ENCODE measurements at regions of chr6 and their contacts with region 1.

Region 1: DNA sequence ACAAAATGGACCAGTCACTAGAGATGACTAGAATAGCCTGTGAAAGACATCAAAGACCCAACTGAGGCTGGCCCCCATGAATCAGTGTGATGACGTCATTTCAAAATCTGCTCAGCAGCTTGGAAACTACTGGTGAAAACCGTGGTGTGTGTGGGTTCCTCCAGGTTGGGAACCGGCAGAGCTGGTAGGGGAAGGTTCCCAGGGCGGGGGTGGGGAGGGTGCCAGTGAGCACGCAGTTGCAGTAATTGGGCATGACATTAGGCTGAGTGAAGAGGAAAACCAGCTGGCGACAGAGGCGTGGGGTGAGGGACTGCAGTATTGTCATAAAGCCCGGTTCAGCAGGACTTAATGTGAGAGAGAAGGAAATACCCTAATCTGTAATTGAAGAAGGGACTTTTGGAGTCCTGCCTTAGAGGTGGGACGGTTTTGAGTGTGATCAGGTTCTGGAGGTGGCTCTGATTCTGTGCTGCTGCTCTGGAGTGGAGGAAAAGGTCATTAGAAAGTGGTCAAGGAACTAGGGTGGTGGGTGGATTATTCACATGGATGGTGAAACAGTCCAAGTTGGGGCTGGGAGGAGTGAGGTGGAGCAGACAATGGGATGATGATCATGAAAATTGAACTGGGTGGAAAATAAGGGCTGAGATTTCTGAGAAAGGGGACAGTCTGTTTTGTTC is 52.0 kb upstream of the MTHFD1L start:
- DNase-seq: peak; percentile 22
- ATAC-seq: peak; percentile 79
- H3K4me3 Mint-ChIP-seq: peak overlapping the region; percentile 69
- H3K27ac Mint-ChIP-seq: peak overlapping the region; percentile 99
- H3K4me1 Mint-ChIP-seq: peaks cover 32% of the 10 kb centered on the region
- H3K27me3 Mint-ChIP-seq: no peaks in the 10 kb centered on the region
- CTCF ChIP-seq: no peak

Region 2: DNA sequence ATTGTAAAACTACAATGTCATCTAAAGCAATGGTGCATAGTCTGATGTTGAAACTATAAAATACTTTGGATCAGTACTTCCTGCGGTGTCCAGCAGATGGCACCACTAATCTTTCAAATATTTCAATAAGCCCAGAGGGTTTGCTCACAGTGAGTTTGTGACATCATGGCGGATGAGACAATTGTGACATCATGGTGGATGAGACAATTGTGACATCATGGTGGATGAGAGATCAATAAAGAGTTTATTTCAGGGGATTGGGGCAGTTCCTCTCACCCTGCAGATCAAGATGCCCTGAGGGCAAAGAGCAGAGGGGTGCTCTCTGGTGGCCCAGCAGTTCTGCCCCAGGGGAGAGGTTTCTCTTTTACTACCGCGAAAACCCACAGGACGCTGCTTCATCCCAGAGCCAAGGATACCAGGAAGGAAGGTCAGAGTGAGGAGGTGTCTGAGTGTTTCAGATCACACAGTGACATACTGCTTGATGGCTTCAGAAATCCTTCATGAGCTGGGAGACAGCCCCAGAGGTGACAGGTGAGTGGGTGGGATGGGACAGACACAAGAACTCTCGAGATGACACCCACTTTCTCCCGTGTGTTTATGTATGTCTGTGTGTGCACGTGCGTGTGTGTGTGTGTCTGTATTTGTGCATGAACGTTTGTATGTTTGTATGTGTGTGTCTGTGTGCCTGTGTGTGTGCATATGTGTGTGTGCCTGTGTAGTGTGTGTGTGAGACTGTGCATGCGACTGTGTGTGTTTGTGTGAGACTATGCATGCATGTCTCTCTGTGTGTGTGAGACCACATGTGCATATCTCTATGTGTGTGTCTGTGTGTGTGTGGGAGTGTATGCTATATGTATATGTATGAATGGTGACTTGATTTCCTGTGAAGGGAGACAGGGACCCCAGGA is 879.0 kb before region 1 on chr6:
- CTCF ChIA-PET with region 1: no interaction called
- POLR2A ChIA-PET with region 1: no interaction called
- intact Hi-C with region 1: loop called (anchors 2 kb)
- DNase-seq: no peak
- ATAC-seq: peak; percentile 33
- H3K4me3 Mint-ChIP-seq: no peak overlapping the region
- H3K27ac Mint-ChIP-seq: no peak overlapping the region
- H3K4me1 Mint-ChIP-seq: peaks cover 21% of the 10 kb centered on the region
- H3K27me3 Mint-ChIP-seq: peaks cover 72% of the 10 kb centered on the region
- CTCF ChIP-seq: no peak

Region 3: GRCh38 chr6:150068720-150069648 is 744.5 kb before region 1 on chr6 and contains the start of gene ULBP3:
- CTCF ChIA-PET with region 1: interaction called, 3 read pairs
- POLR2A ChIA-PET with region 1: no interaction called
- intact Hi-C with region 1: loop called (anchors 2 kb)
- DNase-seq: peak; percentile 64
- ATAC-seq: peak; percentile 92
- H3K4me3 Mint-ChIP-seq: peak within 1 kb of the TSS; percentile 84
- H3K27ac Mint-ChIP-seq: peak within 1 kb of the TSS; percentile 7
- H3K4me1 Mint-ChIP-seq: peaks cover 22% of the 10 kb centered on the region
- H3K27me3 Mint-ChIP-seq: peaks cover 18% of the 10 kb centered on the region
- CTCF ChIP-seq: no peak
- total RNA-seq, gene ULBP3: 0.46 and 0.80 TPM in 2 replicates

Region 4: DNA sequence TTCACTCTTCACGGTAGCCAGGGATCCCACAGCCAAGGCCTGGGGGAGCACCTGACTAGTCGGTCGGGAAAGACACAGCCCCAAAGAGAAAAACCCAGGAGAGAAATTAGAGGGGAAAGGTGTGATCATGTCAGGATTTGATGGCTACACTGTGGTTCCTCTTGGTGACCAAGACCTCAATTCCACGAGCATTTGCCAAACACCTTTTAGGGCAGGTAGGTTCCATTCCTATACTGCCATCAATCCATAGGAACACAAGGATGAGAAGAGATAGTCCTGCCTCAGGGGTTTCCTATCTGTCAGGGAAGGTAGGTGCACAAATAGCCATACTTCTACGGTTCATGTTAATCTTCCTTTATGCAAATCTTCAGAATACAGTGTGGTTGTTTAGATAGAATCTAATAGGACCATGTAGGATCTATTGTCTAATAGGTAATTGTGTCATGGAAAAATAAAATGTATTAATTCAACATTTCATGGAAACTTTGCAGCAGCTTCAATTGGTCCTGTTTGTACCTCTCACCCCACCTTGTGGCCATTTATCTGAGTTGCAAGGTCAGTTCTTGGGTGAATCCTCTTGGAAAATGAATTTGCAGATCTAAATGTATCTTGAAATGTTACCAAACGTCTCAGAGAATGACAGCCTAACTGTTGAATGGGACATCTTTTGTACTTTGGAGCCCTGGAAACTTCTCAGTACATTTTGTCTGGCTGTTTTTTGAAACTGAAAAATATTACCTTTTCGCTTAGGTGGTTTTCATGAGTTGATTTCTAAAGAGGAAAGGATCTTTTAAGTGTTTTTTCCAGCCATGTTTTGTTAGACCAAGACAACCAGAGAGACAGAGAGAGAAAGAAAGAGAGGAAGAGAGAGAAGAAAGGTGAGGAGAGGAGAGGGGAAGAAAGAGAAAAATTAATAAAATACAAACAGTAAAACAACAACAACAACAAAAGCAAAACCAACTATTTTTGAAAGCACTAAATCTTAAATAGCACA is 478.4 kb before region 1 on chr6:
- CTCF ChIA-PET with region 1: interaction called, 4 read pairs
- POLR2A ChIA-PET with region 1: no interaction called
- intact Hi-C with region 1: loop called (anchors 1 kb)
- DNase-seq: no peak
- ATAC-seq: peak; percentile 45
- H3K4me3 Mint-ChIP-seq: no peak overlapping the region
- H3K27ac Mint-ChIP-seq: no peak overlapping the region
- H3K4me1 Mint-ChIP-seq: no peaks in the 10 kb centered on the region
- H3K27me3 Mint-ChIP-seq: peaks cover 11% of the 10 kb centered on the region
- CTCF ChIP-seq: peak; percentile 68

Region 5: DNA sequence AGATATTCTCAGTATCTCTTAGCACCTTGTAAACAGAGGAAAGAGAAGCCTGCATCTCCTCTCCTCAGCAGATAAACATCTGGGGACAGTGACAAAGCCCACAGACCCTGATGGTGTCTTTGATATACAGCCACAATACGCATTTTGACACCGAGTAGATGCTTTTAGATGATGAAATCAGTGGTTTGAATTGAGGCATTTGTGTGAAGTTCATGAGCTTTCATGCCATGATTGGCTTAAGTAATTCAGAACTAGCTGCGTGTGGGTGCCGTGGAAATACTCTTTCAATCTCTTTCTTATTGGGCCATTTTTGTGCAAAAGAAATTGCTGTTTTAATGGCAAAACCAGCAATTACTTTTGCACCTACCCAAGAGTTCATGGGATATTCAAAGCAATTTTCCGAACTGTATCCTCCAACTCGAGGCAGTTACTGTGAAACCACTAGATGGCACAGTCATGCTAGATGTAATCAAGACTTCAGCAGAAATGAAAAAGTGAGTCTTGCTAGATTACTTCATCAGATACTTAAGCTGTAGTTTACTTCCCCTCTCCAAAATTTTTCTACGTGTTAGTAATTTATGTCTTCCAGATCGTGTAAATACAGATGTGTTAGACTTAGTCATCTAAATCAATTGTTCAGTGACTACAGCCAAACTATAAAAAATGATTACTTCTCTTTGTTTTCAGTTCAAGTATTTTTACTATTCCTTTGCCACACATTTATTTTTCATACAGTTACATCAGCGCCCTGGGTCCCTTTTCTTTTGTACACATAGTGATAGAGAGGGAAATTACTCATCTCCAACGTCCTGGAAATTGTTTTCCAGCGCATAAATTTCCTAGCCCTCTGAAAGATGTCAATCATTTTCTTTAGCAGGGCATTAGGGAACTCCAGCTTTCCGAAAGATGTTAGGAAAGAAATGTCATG is 395.3 kb before region 1 on chr6:
- CTCF ChIA-PET with region 1: interaction called, 126 read pairs
- POLR2A ChIA-PET with region 1: interaction called, 13 read pairs
- intact Hi-C with region 1: loop called (anchors 1 kb)
- DNase-seq: no peak
- ATAC-seq: peak; percentile 90
- H3K4me3 Mint-ChIP-seq: peak overlapping the region; percentile 82
- H3K27ac Mint-ChIP-seq: peak overlapping the region; percentile 77
- H3K4me1 Mint-ChIP-seq: peaks cover 14% of the 10 kb centered on the region
- H3K27me3 Mint-ChIP-seq: peaks cover 16% of the 10 kb centered on the region
- CTCF ChIP-seq: peak; percentile 58

Region 6: GRCh38 chr6:150632785-150633485 is 180.5 kb before region 1 on chr6:
- CTCF ChIA-PET with region 1: interaction called, 6 read pairs
- POLR2A ChIA-PET with region 1: interaction called, 26 read pairs
- intact Hi-C with region 1: no loop called
- DNase-seq: peak; percentile 33
- ATAC-seq: peak; percentile 11
- H3K4me3 Mint-ChIP-seq: peak overlapping the region; percentile 99
- H3K27ac Mint-ChIP-seq: peak overlapping the region; percentile 97
- H3K4me1 Mint-ChIP-seq: peaks cover 91% of the 10 kb centered on the region
- H3K27me3 Mint-ChIP-seq: no peaks in the 10 kb centered on the region
- CTCF ChIP-seq: no peak

Region 7: DNA sequence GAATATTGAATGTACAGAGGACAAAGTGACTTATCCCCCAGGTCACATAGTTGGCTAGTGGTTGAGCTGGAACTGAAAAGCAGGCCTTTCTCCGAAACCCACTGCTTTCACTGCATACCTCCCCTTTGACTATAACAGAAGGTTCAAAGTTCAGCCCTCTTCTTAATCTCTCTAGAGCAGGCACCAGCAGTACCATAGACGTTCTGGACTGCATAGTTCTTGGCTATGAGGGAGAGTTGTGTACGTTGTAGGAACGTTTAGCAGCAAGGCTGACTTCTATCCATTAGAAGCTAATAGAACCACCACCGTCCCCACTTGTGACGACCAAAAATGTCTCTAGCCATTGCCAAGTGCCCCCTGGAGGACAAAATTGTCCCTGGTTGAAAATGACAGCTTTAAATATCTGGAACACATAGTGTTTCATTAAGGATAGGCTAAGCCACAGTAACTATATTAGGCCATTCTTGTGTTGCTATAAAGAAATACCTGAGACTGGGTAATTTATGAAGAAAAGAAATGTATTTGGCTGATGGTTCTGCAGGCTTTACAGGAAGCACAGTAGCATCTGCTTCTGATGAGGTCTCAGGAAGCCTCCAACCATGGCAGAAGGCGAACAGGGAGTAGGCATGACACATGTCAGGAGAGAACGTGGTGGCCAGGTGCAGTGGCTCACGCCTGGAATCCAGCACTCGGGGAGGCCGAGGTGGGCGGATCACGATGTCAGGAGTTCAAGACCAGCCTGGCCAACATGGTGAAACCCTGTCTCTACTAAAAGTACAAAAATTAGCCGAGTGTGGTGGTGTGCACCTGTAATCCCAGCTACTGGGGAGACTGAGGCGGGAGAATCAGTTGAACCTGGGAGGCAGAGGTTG is 71.6 kb before region 1 on chr6:
- CTCF ChIA-PET with region 1: interaction called, 8 read pairs
- POLR2A ChIA-PET with region 1: interaction called, 4 read pairs
- intact Hi-C with region 1: loop called (anchors 1 kb)
- DNase-seq: no peak
- ATAC-seq: peak; percentile 72
- H3K4me3 Mint-ChIP-seq: no peak overlapping the region
- H3K27ac Mint-ChIP-seq: peak overlapping the region; percentile 57
- H3K4me1 Mint-ChIP-seq: peaks cover 66% of the 10 kb centered on the region
- H3K27me3 Mint-ChIP-seq: no peaks in the 10 kb centered on the region
- CTCF ChIP-seq: peak; percentile 52

Region 8: DNA sequence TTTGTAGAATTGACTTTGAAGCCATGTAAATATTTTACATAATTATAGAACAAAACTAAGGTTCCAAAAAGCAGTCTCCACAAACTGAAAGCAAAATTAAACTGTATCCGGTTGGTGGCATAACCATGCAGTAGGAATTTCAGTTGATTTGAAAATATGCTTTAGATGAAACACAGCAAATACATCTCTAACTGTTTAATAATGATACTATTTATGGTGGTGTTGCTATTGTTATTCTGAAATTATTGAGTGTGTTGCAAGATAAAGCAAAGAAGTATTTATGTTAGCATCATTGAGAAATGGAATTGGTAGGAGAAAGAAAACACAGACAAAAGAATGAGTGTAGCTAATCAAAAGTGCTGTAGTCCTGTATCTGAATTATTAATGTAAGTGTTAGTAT is 21.7 kb before region 1 on chr6:
- CTCF ChIA-PET with region 1: no interaction called
- POLR2A ChIA-PET with region 1: no interaction called
- intact Hi-C with region 1: no loop called
- DNase-seq: no peak
- ATAC-seq: no peak
- H3K4me3 Mint-ChIP-seq: no peak overlapping the region
- H3K27ac Mint-ChIP-seq: peak overlapping the region; percentile 4
- H3K4me1 Mint-ChIP-seq: peaks cover 9% of the 10 kb centered on the region
- H3K27me3 Mint-ChIP-seq: no peaks in the 10 kb centered on the region
- CTCF ChIP-seq: no peak